ENCODE measurements at regions of chr6 and their contacts with region 1.

Region 1: DNA sequence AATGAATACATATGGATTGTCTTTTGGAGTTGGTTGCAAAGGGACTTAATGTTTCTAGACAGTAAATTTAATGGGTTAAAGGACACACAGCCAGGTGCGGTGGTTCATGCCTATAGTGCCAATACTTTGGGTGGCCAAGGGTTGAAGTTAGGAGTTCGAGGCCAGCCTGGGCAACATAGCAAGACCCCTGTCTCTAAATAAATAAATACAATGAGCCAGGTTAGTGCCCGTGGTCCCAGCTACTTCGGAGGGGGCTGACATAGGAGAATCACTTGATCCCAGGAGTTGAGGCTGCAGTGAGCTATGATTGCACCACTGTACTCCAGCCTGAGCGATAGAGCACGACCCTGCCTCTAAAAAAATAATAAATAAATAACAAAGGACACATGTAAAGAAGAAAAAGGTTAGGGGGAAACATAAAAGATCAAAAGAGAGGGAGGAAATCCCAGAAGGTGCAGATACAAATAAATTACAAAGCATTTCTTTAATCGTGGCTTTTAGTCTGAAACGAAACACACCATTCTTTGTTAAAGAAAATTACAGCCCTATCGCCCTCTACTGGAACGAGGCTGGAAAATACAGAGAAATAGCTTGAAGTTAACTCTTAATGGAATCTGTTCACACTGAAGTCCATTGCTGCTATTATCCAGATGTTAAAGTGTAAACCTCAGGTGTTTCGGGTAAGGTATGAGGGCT is 42.6 kb upstream of the SCML4 start:
- DNase-seq: peak; percentile 51
- H3K4me3 ChIP-seq: no peak overlapping the region
- H3K27ac ChIP-seq: no peak overlapping the region
- H3K4me1 ChIP-seq: peaks cover 0 to 15% of the 10 kb centered on the region in 2 experiments; a peak in 2 of 4 replicates
- H3K27me3 ChIP-seq: no peaks in the 10 kb centered on the region
- CTCF ChIP-seq: peak; percentile 64
- EP300 ChIP-seq: no peak
- RAD21 ChIP-seq: peak; percentile 61

Region 2: GRCh38 chr6:107618672-107619071 is 248.1 kb before region 1 on chr6:
- CTCF ChIA-PET with region 1: no interaction called
- POLR2A ChIA-PET with region 1: no interaction called
- DNase-seq: no peak
- H3K4me3 ChIP-seq: no peak overlapping the region
- H3K27ac ChIP-seq: no peak overlapping the region
- H3K4me1 ChIP-seq: peaks cover 0 to 62% of the 10 kb centered on the region in 2 experiments; a peak in 2 of 4 replicates
- H3K27me3 ChIP-seq: no peaks in the 10 kb centered on the region
- CTCF ChIP-seq: no peak
- EP300 ChIP-seq: no peak
- RAD21 ChIP-seq: no peak

Region 3: DNA sequence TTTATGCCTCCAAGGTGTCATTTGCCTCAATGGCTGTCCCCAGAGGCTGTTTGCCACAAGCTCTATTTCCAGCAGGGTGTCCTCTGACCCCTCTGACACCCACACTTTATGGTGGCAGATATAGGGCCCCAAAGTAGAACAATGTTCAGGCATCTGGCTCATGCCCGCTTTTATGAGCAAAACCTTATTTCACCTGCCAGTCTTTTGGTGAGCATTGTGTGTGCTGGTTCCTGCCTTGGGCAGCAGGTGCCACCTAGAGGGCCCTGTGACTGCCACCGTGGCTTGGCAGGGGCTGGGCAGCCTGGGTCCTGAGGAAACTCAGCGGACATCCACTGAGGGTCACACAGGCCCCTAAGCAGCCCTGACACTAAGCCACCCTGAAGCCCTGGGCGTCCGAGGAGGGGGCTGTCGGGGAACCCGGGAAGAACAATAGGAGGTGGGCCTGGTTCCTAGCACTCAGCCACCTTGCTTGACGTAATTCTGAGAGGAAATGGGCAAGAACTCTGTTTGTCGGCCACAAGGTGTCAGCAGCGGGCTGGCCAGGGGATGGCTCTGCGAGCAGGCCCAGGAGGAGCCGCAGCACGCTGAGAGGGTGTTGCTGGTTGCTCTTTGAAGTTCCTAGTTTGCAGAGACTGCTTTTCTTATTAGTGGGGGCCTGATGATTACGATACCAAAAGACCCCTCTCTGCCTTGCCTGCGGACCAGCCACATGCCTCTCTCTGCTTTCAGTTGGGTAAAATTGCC is 191.6 kb before region 1 on chr6:
- CTCF ChIA-PET with region 1: interaction called, 21 read pairs
- POLR2A ChIA-PET with region 1: no interaction called
- DNase-seq: peak; percentile 83
- H3K4me3 ChIP-seq: no peak overlapping the region; a peak in 1 of 4 replicates
- H3K27ac ChIP-seq: peak overlapping the region in 1 of 2 experiments; percentile 64; a peak in 1 of 4 replicates
- H3K4me1 ChIP-seq: peaks cover 0 to 22% of the 10 kb centered on the region in 2 experiments; a peak in 2 of 4 replicates
- H3K27me3 ChIP-seq: no peaks in the 10 kb centered on the region
- CTCF ChIP-seq: peak; percentile 83
- EP300 ChIP-seq: no peak
- RAD21 ChIP-seq: peak; percentile 86

Region 4: GRCh38 chr6:107894821-107895396 is 28.2 kb after region 1 on chr6:
- CTCF ChIA-PET with region 1: no interaction called
- POLR2A ChIA-PET with region 1: no interaction called
- DNase-seq: no peak
- H3K4me3 ChIP-seq: no peak overlapping the region
- H3K27ac ChIP-seq: no peak overlapping the region
- H3K4me1 ChIP-seq: no peaks in the 10 kb centered on the region
- H3K27me3 ChIP-seq: no peaks in the 10 kb centered on the region
- CTCF ChIP-seq: no peak
- EP300 ChIP-seq: no peak
- RAD21 ChIP-seq: no peak